ENCODE measurements at regions of chr3 and their contacts with region 1.

Region 1: DNA sequence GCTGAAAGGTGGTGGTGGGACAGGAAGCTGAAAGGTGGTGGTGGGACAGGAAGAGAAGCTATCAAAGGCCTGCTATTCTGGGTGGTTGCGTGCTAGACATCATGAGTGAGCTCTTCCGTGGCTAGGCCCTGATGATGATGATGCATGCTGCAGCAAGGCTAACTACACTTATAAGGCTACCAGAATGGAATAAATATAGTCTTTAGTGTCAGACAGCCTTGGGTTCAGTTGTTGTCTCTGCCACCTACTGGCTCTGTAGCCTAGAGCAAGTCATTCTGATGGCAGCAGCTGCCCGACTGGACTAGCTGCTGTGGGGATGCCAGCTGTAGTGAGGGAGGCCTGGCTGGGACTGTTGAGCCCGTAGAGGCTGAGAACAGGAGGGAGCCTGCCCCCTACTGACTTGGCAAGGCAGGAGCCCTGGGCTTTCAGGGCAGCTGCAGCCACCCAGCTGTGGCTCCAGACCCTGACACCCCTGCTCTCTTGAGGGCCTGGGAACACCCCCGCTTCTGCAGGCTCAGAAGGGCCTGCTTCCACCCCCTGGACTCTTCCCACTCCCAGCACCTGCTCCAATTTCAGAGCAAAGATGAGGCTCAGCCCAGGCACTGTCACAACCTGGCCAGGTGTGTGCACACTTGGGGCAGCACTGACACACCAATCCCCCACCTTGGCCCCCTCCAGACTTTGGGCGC is 21.4 kb upstream of the ZBED2 start:
- DNase-seq: peak; percentile 60 to 85 (median 71)
- H3K4me3 ChIP-seq: no peak overlapping the region
- H3K4me3 Mint-ChIP-seq: peak overlapping the region in 7 of 8 donors; percentile 43 to 73 (median 62)
- H3K27ac ChIP-seq: peak overlapping the region; percentile 53
- H3K27ac Mint-ChIP-seq: peak overlapping the region; percentile 89 to 98 (median 92)
- H3K4me1 ChIP-seq: peaks cover 43% of the 10 kb centered on the region
- H3K4me1 Mint-ChIP-seq: peaks cover 41 to 65% (median 50%) of the 10 kb centered on the region in 4 donors
- H3K27me3 ChIP-seq: no peaks in the 10 kb centered on the region
- H3K27me3 Mint-ChIP-seq: no peaks in the 10 kb centered on the region

Region 2: DNA sequence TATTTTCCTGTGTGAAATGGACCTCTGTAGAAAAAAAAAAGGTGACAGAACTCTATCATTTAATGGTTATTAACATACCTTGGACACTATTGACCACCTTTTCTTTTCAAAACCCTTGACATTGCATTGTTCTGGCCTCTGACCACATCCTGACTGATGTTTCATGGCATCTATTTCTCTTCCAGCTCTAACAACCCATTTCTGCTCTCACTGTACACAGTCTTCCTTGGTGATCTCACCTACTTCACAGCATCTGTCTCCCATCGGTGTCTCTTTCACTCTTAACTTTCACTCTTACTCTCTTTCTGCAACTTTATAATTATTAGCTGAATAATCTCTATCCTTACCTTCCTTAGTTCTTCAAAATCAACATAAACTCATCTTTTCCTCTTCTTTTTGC is 291.9 kb before region 1 on chr3:
- CTCF ChIA-PET with region 1: no interaction called
- POLR2A ChIA-PET with region 1: no interaction called
- intact Hi-C with region 1: loop called (anchors 5 kb)
- DNase-seq: no peak
- H3K4me3 ChIP-seq: peak overlapping the region in 1 of 2 donors; percentile 14
- H3K4me3 Mint-ChIP-seq: peak overlapping the region; percentile 57 to 88 (median 80)
- H3K27ac ChIP-seq: peak overlapping the region; percentile 18
- H3K27ac Mint-ChIP-seq: peak overlapping the region; percentile 33 to 94 (median 85)
- H3K4me1 ChIP-seq: peaks cover 23% of the 10 kb centered on the region
- H3K4me1 Mint-ChIP-seq: peaks cover 26 to 41% (median 33%) of the 10 kb centered on the region in 4 donors
- H3K27me3 ChIP-seq: no peaks in the 10 kb centered on the region
- H3K27me3 Mint-ChIP-seq: no peaks in the 10 kb centered on the region

Region 3: GRCh38 chr3:111392901-111393351 is 223.6 kb before region 1 on chr3:
- CTCF ChIA-PET with region 1: no interaction called
- POLR2A ChIA-PET with region 1: no interaction called
- intact Hi-C with region 1: loop called (anchors 5 kb)
- DNase-seq: peak; percentile 59 to 81 (median 65)
- H3K4me3 ChIP-seq: no peak overlapping the region
- H3K4me3 Mint-ChIP-seq: peak overlapping the region in 1 of 8 donors; percentile 24
- H3K27ac ChIP-seq: no peak overlapping the region
- H3K27ac Mint-ChIP-seq: peak overlapping the region; percentile 50 to 92 (median 72)
- H3K4me1 ChIP-seq: peaks cover 14% of the 10 kb centered on the region
- H3K4me1 Mint-ChIP-seq: peaks cover 14 to 25% (median 21%) of the 10 kb centered on the region in 4 donors
- H3K27me3 ChIP-seq: no peaks in the 10 kb centered on the region
- H3K27me3 Mint-ChIP-seq: no peaks in the 10 kb centered on the region

Region 4: DNA sequence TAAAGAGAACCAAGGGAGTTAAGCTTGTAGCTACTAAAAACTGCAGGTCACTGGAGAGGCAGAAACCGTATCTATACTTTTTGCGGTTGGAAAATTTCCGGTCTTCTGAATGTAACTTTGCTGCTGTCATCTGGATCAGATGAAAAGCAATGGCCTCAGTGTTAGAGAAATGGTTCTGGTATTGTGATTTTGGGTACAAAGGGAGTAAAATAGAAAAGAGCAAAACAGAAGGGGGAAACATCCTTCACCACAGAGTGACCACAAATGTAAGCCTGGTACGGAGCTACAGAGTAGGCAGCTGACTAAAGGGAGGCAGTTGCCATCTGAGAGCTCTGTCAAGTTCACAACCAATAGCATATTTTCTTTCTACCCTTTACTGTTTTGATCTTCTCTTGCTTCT is 68.9 kb before region 1 on chr3:
- CTCF ChIA-PET with region 1: interaction called, 19 read pairs
- POLR2A ChIA-PET with region 1: interaction called, 58 read pairs
- intact Hi-C with region 1: loop called (anchors 1 kb)
- DNase-seq: peak; percentile 70 to 78 (median 74)
- H3K4me3 ChIP-seq: peak overlapping the region; percentile 20 to 70
- H3K4me3 Mint-ChIP-seq: no peak overlapping the region
- H3K27ac ChIP-seq: peak overlapping the region; percentile 89
- H3K27ac Mint-ChIP-seq: no peak overlapping the region
- H3K4me1 ChIP-seq: peaks cover 90% of the 10 kb centered on the region
- H3K4me1 Mint-ChIP-seq: peaks cover 0 to 42% (median 36%) of the 10 kb centered on the region in 4 donors
- H3K27me3 ChIP-seq: no peaks in the 10 kb centered on the region
- H3K27me3 Mint-ChIP-seq: no peaks in the 10 kb centered on the region

Region 5: GRCh38 chr3:111577794-111578685 is 38.5 kb before region 1 on chr3:
- CTCF ChIA-PET with region 1: interaction called, 22 read pairs
- POLR2A ChIA-PET with region 1: interaction called, 6 read pairs
- intact Hi-C with region 1: loop called (anchors 1 kb)
- DNase-seq: peak in 4 of 5 donors; percentile 10 to 28 (median 20)
- H3K4me3 ChIP-seq: no peak overlapping the region
- H3K4me3 Mint-ChIP-seq: peak overlapping the region in 1 of 8 donors; percentile 6
- H3K27ac ChIP-seq: no peak overlapping the region
- H3K27ac Mint-ChIP-seq: peak overlapping the region in 6 of 7 donors; percentile 0 to 73 (median 46)
- H3K4me1 ChIP-seq: peaks cover 10% of the 10 kb centered on the region
- H3K4me1 Mint-ChIP-seq: peaks cover 31 to 60% (median 45%) of the 10 kb centered on the region in 4 donors
- H3K27me3 ChIP-seq: no peaks in the 10 kb centered on the region
- H3K27me3 Mint-ChIP-seq: no peaks in the 10 kb centered on the region

Region 6: DNA sequence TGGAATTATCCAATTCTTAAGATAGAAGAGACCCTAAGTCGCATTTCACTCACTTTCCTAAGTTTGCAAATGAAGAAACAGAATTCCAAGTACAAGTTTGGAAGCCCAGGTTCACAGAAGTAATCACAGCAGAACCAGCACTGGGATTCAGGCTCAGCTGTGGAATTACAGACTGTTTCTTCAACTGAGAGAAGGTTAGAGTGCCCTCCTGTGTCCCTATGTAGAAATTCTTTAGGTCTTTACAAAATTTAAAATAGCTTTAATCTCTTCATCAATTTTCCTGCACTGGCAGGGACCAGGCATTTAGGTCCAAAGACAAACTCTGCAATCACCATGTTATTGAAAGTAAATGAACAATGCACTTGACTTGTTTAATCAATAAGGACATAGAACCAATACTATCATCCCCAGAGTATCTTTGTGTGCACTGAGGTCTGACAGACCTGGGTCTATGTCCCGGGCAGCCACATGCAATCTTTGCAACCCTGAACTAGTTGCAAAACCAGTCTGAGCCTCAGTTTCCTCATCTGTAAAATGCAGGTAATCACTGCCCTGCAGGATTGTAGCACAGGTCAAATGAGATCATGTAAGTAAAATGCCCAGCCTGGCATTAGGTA is 74.8 kb after region 1 on chr3:
- CTCF ChIA-PET with region 1: interaction called, 10 read pairs
- POLR2A ChIA-PET with region 1: no interaction called
- intact Hi-C with region 1: no loop called
- DNase-seq: peak in 2 of 5 donors; percentile 27 to 30
- H3K4me3 ChIP-seq: no peak overlapping the region
- H3K4me3 Mint-ChIP-seq: no peak overlapping the region
- H3K27ac ChIP-seq: no peak overlapping the region
- H3K27ac Mint-ChIP-seq: peak overlapping the region in 2 of 7 donors; percentile 23 to 45
- H3K4me1 ChIP-seq: peaks cover 19% of the 10 kb centered on the region
- H3K4me1 Mint-ChIP-seq: peaks cover 32 to 51% (median 39%) of the 10 kb centered on the region in 4 donors
- H3K27me3 ChIP-seq: no peaks in the 10 kb centered on the region
- H3K27me3 Mint-ChIP-seq: no peaks in the 10 kb centered on the region

Measured in CD4-positive, alpha-beta memory T cell (primary cell).